ENCODE measurements at regions of chr7 and their contacts with region 1.

Region 1: DNA sequence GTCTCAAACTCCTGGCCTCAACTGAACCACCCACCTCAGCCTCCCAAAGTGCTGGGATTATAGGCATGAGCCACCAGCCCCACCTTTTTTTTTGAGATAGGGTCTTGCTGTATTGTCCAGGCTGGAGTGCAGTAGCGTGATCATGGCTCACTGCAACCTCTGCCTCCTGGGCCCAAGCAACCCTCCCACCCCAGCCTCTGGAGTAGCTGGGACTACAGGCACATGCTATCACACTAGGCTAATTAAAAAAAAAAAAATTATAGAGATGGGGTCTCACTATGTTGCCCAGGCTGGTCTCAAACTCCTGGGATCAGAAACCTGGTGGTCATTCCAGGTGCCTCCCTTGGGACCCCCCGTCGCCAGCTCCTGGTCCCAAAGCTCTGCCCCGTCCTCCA is 25.0 kb downstream of the GTF2IRD1 start:
- H3K4me3 ChIP-seq: no peak overlapping the region
- H3K27ac ChIP-seq: no peak overlapping the region
- H3K4me1 ChIP-seq: peaks cover 21% of the 10 kb centered on the region
- CTCF ChIP-seq: no peak

Region 2: DNA sequence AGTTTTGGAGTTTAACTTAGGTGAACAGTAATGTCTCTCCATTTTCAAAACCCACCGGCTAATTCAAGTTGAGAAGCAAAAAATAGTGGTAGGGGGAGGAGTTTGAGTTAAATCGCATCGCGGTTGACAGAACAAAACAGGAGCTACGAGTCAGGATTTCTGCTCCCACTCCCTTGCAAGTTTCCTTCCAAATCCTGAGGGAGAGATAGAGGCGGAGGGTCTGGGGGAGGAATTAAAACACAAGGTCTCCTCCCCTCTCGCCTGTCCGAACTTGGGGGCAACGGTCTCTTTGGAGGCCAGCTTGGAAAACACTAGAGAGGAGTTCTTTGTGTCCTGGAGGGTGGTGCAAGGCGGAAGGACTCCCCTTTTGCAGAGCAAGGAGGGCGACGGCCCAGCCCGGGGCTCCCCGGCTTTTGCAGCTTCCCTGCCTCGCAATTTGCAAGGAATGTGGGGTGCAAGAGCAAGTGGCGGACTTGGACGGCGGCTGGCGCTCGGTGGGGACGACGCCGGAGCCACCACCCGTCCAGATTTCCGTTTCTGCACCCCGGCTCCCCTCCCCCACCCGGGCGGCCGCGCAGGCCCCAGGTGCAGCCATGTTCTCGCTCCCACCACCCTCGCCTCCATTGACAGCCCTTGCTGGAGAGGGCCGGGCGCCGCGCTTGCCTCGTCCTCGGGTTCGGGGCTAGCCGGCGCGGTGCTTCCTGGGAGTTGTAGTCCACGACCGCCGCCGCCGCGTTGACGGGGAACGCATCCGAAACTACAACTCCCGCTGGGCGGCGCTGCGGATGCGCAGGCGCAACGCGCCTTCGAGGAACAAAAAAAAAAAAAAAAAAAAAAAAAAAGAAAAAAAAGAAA is 178.4 kb after region 1 on chr7:
- CTCF ChIA-PET with region 1: no interaction called
- POLR2A ChIA-PET with region 1: interaction called, 13 read pairs
- H3K4me3 ChIP-seq: peak overlapping the region; percentile 88
- H3K27ac ChIP-seq: peak overlapping the region; percentile 99
- H3K4me1 ChIP-seq: peaks cover 9% of the 10 kb centered on the region
- CTCF ChIP-seq: peak; percentile 17; the same call in 1 of the 2 replicates

Measured in HEK293 (cell line).